Activated naive CD4-positive, alpha-beta T cell treated with anti-CD3 and anti-CD28 coated beads, Interleukin-2, amount 10 ng/mL, durations not matched to agents 7 days and 5 days (primary cell): ENCODE measurements at regions of chr20 and their contacts with region 1.

Region 1: GRCh38 chr20:50153485-50154377 is at the start of gene PEDS1:
- DNase-seq: peak; percentile 91
- H3K4me3 Mint-ChIP-seq: peak within 1 kb of the TSS; percentile 86
- H3K27ac Mint-ChIP-seq: peak within 1 kb of the TSS; percentile 90
- H3K4me1 Mint-ChIP-seq: peaks cover 44% of the 10 kb centered on the region
- H3K27me3 Mint-ChIP-seq: peaks cover 10% of the 10 kb centered on the region

Region 2: GRCh38 chr20:50115591-50116372 is 37.9 kb before region 1 on chr20:
- CTCF ChIA-PET with region 1: interaction called, 20 read pairs
- DNase-seq: peak; percentile 95
- H3K4me3 Mint-ChIP-seq: peak overlapping the region; percentile 83
- H3K27ac Mint-ChIP-seq: peak overlapping the region; percentile 87
- H3K4me1 Mint-ChIP-seq: peaks cover 53% of the 10 kb centered on the region
- H3K27me3 Mint-ChIP-seq: no peaks in the 10 kb centered on the region

Region 3: GRCh38 chr20:50120897-50121693 is 32.6 kb before region 1 on chr20:
- CTCF ChIA-PET with region 1: interaction called, 20 read pairs
- DNase-seq: peak; percentile 77
- H3K4me3 Mint-ChIP-seq: no peak overlapping the region
- H3K27ac Mint-ChIP-seq: peak overlapping the region; percentile 49
- H3K4me1 Mint-ChIP-seq: peaks cover 10% of the 10 kb centered on the region
- H3K27me3 Mint-ChIP-seq: no peaks in the 10 kb centered on the region